PC-9 (cell line): ENCODE measurements at regions of chr6 and their contacts with region 1.

Region 1: DNA sequence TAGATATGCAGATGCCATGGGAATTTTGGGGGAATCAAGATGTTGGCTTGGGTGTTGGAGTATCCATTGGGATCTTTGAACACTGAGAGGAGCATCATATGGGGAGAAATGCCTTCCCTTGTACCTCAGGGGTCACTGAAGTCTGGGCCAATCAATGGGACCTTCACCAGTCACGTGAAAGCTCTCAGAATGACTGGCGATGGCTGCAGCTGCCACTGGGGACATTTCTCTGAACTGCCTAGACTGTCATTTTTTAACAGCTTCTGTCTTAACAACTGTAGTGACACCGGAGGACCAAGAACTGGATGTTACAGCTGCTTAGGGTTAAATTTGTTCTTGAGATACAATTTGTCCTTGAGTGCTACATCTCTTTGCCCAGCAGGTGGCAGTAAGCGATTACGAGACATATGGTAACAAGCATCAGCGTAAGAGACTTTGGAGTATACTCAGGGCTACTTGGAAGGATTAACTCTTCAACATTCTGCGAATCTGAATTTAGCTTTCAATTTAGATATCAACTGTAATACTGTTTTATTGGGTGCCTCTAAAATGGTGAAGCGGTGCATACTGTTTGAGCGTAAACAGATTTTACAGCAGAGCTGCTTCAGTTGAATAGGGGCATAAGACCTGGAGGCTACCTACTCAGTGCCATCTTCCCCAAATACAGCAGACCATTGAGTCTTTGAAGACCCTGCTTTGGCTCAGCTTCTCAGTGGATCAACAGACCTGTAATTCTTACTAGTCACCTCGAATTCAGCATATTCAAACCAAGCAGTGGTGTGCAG is 36.0 kb downstream of the CCN2 start:
- DNase-seq: peak; percentile 42 to 45
- H3K4me3 ChIP-seq: no peak overlapping the region
- H3K27ac ChIP-seq: no peak overlapping the region
- H3K4me1 ChIP-seq: no peaks in the 10 kb centered on the region
- H3K27me3 ChIP-seq: no peaks in the 10 kb centered on the region
- CTCF ChIP-seq: peak; percentile 96

Region 2: DNA sequence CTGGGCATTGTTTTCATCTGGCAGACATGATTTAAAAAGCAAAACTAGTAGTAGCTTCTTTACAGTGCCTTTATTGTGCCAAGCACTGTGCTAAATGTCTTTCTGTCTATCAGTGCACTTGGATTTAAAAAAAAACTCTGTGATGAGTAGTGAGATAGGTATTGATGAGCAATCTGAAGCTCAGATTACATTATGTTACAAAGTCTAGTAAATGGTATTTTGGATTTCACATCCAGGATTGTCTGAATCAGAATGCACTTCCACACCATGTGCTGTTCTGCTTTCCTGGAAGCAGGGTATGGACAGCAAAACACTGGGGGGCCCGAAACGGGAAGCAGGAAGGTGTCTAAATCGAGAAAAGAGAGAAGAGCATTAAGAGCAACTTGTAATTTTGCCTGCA is 139.4 kb after region 1 on chr6:
- CTCF ChIA-PET with region 1: no interaction called
- POLR2A ChIA-PET with region 1: no interaction called
- intact Hi-C with region 1: no loop called
- DNase-seq: no peak
- H3K4me3 ChIP-seq: no peak overlapping the region
- H3K27ac ChIP-seq: no peak overlapping the region
- H3K4me1 ChIP-seq: peaks cover 7% of the 10 kb centered on the region; the same call in 1 of the 2 replicates
- H3K27me3 ChIP-seq: no peaks in the 10 kb centered on the region
- CTCF ChIP-seq: no peak

Region 3: GRCh38 chr6:132279592-132280139 is 364.5 kb after region 1 on chr6:
- CTCF ChIA-PET with region 1: interaction called, 8 read pairs
- POLR2A ChIA-PET with region 1: no interaction called
- intact Hi-C with region 1: loop called (anchors 1 kb)
- DNase-seq: peak; percentile 55 to 67
- H3K4me3 ChIP-seq: peak overlapping the region; percentile 56
- H3K27ac ChIP-seq: no peak overlapping the region
- H3K4me1 ChIP-seq: 0 out of 2 replicates have a peak, but pooled peaks cover 3% of the 10 kb centered on the region
- H3K27me3 ChIP-seq: no peaks in the 10 kb centered on the region
- CTCF ChIP-seq: peak; percentile 100